AG04449 (cell line): ENCODE measurements at regions of chr10 and their contacts with region 1.

Region 1: DNA sequence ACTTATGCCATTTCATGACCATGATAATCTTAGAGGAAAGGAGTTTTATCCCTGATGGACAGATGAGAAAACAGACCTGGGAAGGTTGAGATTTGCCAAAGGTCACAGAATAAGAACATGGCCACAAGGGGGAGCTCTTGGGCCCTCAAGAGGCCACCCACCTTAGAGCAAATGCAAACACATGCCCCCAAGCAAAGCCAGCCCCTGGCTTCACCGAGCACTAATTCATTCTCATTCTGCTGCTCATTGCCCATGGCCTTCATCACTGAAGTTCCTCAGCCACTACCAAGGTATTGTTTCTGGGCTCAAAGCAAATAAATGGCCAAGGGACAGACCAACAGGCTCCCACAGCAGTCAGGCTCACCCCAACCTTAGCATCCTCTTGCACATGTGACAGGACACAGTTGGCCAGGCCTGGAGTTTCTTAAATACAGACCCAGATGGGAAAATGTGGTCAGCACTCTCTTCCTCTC is 44.2 kb downstream of the PDLIM1 start:
- DNase-seq: no peak
- H3K4me3 ChIP-seq: no peak overlapping the region
- CTCF ChIP-seq: peak; percentile 60

Region 2: DNA sequence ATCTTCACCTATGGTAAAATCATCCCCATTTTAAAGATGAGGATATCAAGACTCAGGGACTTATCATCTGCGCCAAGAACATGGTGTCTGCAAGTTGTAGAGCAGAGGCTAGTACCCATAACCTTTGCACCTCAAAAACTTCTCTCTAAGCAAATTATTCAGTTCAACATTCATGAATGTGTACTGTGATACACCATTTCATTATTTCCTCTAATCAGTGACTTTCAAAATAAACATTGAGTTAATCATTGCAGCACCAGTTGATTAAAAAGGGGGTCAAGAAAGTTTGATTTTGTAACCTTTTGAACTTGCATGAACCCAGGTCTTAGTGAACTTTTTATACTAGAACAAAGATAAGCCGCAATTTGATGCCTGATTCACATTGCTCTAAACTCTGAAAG is 129.7 kb before region 1 on chr10:
- CTCF ChIA-PET with region 1: no interaction called
- POLR2A ChIA-PET with region 1: no interaction called
- DNase-seq: no peak
- H3K4me3 ChIP-seq: no peak overlapping the region
- CTCF ChIP-seq: no peak

Region 3: GRCh38 chr10:95133016-95133752 is 113.4 kb before region 1 on chr10:
- CTCF ChIA-PET with region 1: interaction called, 20 read pairs
- POLR2A ChIA-PET with region 1: no interaction called
- DNase-seq: peak; percentile 19
- H3K4me3 ChIP-seq: no peak overlapping the region
- CTCF ChIP-seq: peak; percentile 79

Region 4: DNA sequence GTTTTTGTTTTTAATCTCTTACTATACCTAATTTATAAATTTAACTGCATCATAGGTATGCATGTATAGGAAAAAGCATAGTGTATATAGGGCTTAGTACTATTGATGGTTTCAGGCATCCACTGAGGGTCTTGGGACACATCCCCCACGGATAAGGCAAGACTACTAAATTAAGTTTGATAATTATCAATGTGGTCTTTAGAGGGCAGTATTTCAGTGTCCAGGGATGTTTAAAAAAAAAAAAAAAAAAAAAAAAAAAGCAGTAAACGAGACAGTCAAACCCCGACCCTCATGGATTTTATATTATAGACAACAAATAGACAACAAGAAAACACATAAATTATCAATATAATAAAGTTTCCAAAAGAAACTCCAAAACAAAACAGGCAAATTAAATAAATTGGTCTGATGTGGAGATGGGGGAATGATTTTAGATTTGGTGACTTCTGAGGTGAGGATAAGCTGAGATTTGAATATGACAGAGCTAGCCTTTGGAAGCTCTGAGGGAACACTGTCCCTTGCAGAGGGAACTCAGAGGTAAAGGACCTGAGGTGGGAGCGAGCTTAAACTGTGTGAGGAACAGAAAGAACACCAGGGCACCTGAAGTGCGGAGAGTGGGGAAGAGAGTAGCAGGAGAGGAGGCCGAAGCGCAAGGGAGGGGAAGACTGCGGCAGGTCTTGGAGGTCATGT is 37.8 kb before region 1 on chr10:
- CTCF ChIA-PET with region 1: interaction called, 84 read pairs
- POLR2A ChIA-PET with region 1: no interaction called
- DNase-seq: no peak
- H3K4me3 ChIP-seq: no peak overlapping the region
- CTCF ChIP-seq: peak; percentile 12

Region 5: GRCh38 chr10:95236068-95236903 is 10.3 kb before region 1 on chr10:
- CTCF ChIA-PET with region 1: interaction called, 63 read pairs
- POLR2A ChIA-PET with region 1: no interaction called
- DNase-seq: no peak
- H3K4me3 ChIP-seq: no peak overlapping the region
- CTCF ChIP-seq: no peak

Region 6: GRCh38 chr10:95273393-95274312 is 27.0 kb after region 1 on chr10:
- CTCF ChIA-PET with region 1: interaction called, 30 read pairs
- POLR2A ChIA-PET with region 1: interaction called, 3 read pairs
- DNase-seq: no peak
- H3K4me3 ChIP-seq: peak overlapping the region; percentile 28; the same call in 1 of the 2 replicates
- CTCF ChIP-seq: no peak

Region 7: GRCh38 chr10:95363303-95363912 is 116.8 kb after region 1 on chr10:
- CTCF ChIA-PET with region 1: interaction called, 601 read pairs
- POLR2A ChIA-PET with region 1: no interaction called
- DNase-seq: no peak
- H3K4me3 ChIP-seq: no peak overlapping the region
- CTCF ChIP-seq: peak; percentile 69

Region 8: GRCh38 chr10:95408983-95409873 is 162.6 kb after region 1 on chr10:
- CTCF ChIA-PET with region 1: no interaction called
- POLR2A ChIA-PET with region 1: no interaction called
- DNase-seq: no peak
- H3K4me3 ChIP-seq: no peak overlapping the region
- CTCF ChIP-seq: no peak